ENCODE measurements at regions of chr4 and their contacts with region 1.

Region 1: GRCh38 chr4:87856816-87857215 is 24.0 kb downstream of the MEPE start:
- DNase-seq: no peak
- ATAC-seq: peak in 1 of 4 donors; percentile 45
- H3K4me3 ChIP-seq: no peak overlapping the region
- H3K27ac ChIP-seq: peak overlapping the region in 1 of 4 donors; percentile 44
- H3K4me1 ChIP-seq: peaks cover 0 to 9% (median 0%) of the 10 kb centered on the region in 3 donors
- H3K27me3 ChIP-seq: no peaks in the 10 kb centered on the region
- CTCF ChIP-seq: no peak

Region 2: GRCh38 chr4:87973283-87974169 is 116.7 kb after region 1 on chr4:
- intact Hi-C with region 1: loop called in 2 of 3 experiments (anchors 5 kb)
- DNase-seq: peak in 5 of 6 donors; percentile 33 to 64 (median 53)
- ATAC-seq: peak; percentile 74 to 86 (median 84)
- H3K4me3 ChIP-seq: peak overlapping the region in 1 of 4 donors; percentile 17
- H3K27ac ChIP-seq: peak overlapping the region in 2 of 4 donors; percentile 9 to 46
- H3K4me1 ChIP-seq: peaks cover 0 to 4% (median 0%) of the 10 kb centered on the region in 3 donors
- H3K27me3 ChIP-seq: peaks cover 0 to 7% (median 0%) of the 10 kb centered on the region in 4 donors
- CTCF ChIP-seq: peak; percentile 47 to 82 (median 60)